Thyroid gland (tissue), 4 donors: ENCODE measurements at regions of chr4 and their contacts with region 1.

Region 1: GRCh38 chr4:183602557-183603027 is 56.4 kb downstream of the RWDD4 start:
- DNase-seq: peak in 1 of 2 donors; percentile 7
- H3K4me3 ChIP-seq: no peak overlapping the region
- H3K27ac ChIP-seq: no peak overlapping the region
- H3K4me1 ChIP-seq: no peaks in the 10 kb centered on the region
- H3K27me3 ChIP-seq: no peaks in the 10 kb centered on the region
- CTCF ChIP-seq: peak in 3 of 6 experiments; percentile 35 to 55 (median 44)
- POLR2A ChIP-seq: no peak

Region 2: GRCh38 chr4:183471946-183472708 is 130.5 kb before region 1 on chr4:
- intact Hi-C with region 1: loop called (anchors 10 kb)
- DNase-seq: peak; percentile 89 to 93
- H3K4me3 ChIP-seq: no peak overlapping the region
- H3K27ac ChIP-seq: no peak overlapping the region
- H3K4me1 ChIP-seq: no peaks in the 10 kb centered on the region
- H3K27me3 ChIP-seq: no peaks in the 10 kb centered on the region
- CTCF ChIP-seq: peak; percentile 71 to 80 (median 77)
- POLR2A ChIP-seq: no peak